Heart right ventricle (tissue), 16 donors: ENCODE measurements at regions of chr1 and their contacts with region 1.

Region 1: DNA sequence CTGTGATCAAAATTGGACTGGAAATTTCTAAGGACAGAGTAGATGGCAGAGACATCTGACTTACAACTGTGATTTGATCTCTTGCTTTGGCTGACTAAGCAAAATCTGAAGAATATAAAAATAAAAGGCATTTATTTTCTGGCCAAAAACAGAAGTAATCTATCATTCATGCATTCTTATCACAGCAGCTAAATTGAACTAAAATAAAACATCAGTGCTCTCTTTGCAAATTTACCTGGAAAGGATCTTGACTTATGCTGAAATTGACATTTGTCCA is 81.4 kb upstream of the ZNF678 start:
- DNase-seq: no peak
- ATAC-seq: no peak
- H3K4me3 ChIP-seq: no peak overlapping the region
- H3K27ac ChIP-seq: no peak overlapping the region
- H3K4me1 ChIP-seq: no peaks in the 10 kb centered on the region
- H3K27me3 ChIP-seq: peaks cover 0 to 17% (median 0%) of the 10 kb centered on the region in 7 donors
- CTCF ChIP-seq: no peak

Region 2: DNA sequence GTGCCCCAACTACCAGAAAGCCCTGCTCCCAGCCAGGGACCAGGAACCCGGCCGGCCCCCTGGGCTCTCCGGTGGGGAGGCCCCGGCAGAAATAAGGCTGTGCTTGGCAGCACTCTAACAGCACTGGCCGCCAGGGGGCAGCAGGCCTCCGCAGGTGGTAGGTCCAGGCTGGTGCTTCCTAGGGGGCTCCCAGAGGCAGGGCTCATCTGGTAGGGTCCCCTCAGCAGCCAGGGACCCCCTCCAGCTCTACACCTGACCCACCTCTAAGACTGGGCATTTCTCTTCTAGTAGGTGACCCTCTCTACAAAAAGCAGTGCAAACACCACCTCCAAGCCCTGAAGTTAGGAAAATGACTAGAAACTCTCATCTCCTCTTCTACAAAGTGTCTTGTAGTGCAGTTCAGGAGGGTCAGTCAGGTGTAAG is 847.8 kb before region 1 on chr1:
- intact Hi-C with region 1: no loop called
- DNase-seq: peak; percentile 80 to 86
- ATAC-seq: peak; percentile 64 to 83 (median 79)
- H3K4me3 ChIP-seq: no peak overlapping the region
- H3K27ac ChIP-seq: peak overlapping the region in 8 of 10 donors; percentile 11 to 71 (median 40)
- H3K4me1 ChIP-seq: peaks cover 7 to 68% (median 40%) of the 10 kb centered on the region in 9 donors
- H3K27me3 ChIP-seq: no peaks in the 10 kb centered on the region
- CTCF ChIP-seq: peak; percentile 93 to 98 (median 95)

Region 3: GRCh38 chr1:227542143-227543120 is 60.5 kb after region 1 on chr1:
- intact Hi-C with region 1: loop called in 7 of 10 experiments (anchors 2 to 10 kb)
- DNase-seq: peak; percentile 84 to 91
- ATAC-seq: peak; percentile 95 to 97 (median 97)
- H3K4me3 ChIP-seq: peak overlapping the region; percentile 45 to 88 (median 76)
- H3K27ac ChIP-seq: peak overlapping the region; percentile 2 to 78 (median 68)
- H3K4me1 ChIP-seq: peaks cover 0 to 17% (median 12%) of the 10 kb centered on the region in 9 donors
- H3K27me3 ChIP-seq: peaks cover 0 to 7% (median 0%) of the 10 kb centered on the region in 7 donors
- CTCF ChIP-seq: peak; percentile 95 to 99 (median 99)

Region 4: GRCh38 chr1:227563324-227564201 is 81.6 kb after region 1 on chr1 and contains the start of gene ZNF678:
- intact Hi-C with region 1: no loop called
- DNase-seq: peak; percentile 87 to 95
- ATAC-seq: peak; percentile 95 to 99 (median 97)
- H3K4me3 ChIP-seq: peak within 1 kb of the TSS; percentile 64 to 84 (median 76)
- H3K27ac ChIP-seq: peak within 1 kb of the TSS; percentile 64 to 90 (median 88)
- H3K4me1 ChIP-seq: peaks cover 0 to 20% (median 8%) of the 10 kb centered on the region in 9 donors
- H3K27me3 ChIP-seq: peaks cover 0 to 34% (median 33%) of the 10 kb centered on the region in 7 donors
- CTCF ChIP-seq: no peak
- total RNA-seq, gene ZNF678: 2.5 to 4.7 (median 3.5) TPM

Region 5: GRCh38 chr1:227728059-227728891 is 246.3 kb after region 1 on chr1:
- intact Hi-C with region 1: loop called in 2 of 10 experiments (anchors 5 to 10 kb)
- DNase-seq: peak; percentile 83 to 84
- ATAC-seq: peak; percentile 60 to 71 (median 66)
- H3K4me3 ChIP-seq: peak overlapping the region; percentile 36 to 79 (median 62)
- H3K27ac ChIP-seq: peak overlapping the region; percentile 56 to 87 (median 78)
- H3K4me1 ChIP-seq: peaks cover 10 to 41% (median 26%) of the 10 kb centered on the region in 9 donors
- H3K27me3 ChIP-seq: peaks cover 0 to 9% (median 0%) of the 10 kb centered on the region in 7 donors
- CTCF ChIP-seq: peak in 1 of 9 donors; percentile 9

Region 6: DNA sequence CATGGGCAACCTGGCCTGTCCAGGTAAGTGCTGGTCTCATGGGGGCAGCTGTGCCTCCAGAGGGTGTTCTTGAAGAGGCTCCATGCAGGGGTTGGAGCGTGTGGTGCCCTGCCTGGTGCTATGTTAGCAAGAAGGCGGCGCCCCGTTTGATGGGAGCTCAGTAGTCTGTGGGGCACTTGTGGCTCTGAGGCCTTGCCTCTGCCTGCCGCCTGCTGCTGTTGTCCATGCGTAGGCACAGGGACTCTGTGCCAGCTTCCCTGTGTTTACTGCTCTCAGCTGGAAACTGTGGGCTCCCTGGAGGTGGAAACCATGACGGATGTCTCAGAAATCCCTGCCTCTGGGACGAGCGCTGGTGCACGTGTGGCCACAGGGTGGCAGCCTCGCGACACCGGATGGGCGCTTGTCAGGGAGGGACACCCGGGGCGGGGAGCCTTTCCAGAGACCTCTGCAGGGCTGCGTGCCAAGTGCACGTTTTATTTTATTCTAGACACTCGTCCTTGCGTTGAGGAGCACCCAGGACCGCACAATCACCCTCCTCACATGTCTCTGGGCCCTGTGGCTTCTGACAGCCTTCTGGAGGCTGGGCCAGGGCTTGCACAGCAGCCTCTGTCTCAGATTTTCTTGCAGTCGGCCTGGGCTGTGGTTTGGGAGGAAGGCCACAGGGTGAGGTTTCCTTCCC is 280.4 kb after region 1 on chr1:
- intact Hi-C with region 1: loop called in 3 of 10 experiments (anchors 5 to 10 kb)
- DNase-seq: peak; percentile 90
- ATAC-seq: peak; percentile 81 to 89 (median 84)
- H3K4me3 ChIP-seq: peak overlapping the region in 4 of 10 donors; percentile 6 to 34 (median 24)
- H3K27ac ChIP-seq: peak overlapping the region in 8 of 10 donors; percentile 5 to 91 (median 63)
- H3K4me1 ChIP-seq: peaks cover 11 to 69% (median 54%) of the 10 kb centered on the region in 9 donors
- H3K27me3 ChIP-seq: no peaks in the 10 kb centered on the region
- CTCF ChIP-seq: peak; percentile 80 to 97 (median 92)

Region 7: DNA sequence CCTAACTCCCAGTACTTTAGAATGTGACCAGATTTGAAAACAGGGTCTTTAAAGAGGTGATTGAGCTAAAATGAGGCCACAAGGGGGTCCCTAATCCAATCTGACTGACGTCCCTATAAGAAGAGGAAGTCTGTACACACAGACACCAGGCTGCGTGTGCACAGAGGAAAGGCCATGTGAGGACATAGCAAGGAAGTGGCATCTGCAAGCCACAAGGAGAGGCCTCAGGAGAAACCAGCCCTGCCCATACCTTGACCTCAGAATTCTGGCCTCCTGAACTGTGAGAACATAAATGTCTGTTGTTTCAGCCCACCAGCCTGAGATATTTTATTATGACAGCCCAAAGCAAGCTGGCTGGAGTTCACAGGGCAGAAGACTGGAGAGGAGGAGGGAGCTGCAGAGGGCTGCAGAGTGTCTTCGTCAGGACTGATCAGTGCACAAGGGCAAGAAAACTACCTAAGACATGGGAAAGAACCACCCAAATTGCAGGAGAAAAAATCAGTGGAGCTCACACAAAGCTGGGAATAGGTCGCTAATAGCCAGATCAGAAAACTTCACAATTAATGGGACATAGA is 479.8 kb after region 1 on chr1:
- intact Hi-C with region 1: loop called in 1 of 10 experiments (anchors 5 kb)
- DNase-seq: no peak
- ATAC-seq: no peak
- H3K4me3 ChIP-seq: no peak overlapping the region
- H3K27ac ChIP-seq: no peak overlapping the region
- H3K4me1 ChIP-seq: no peaks in the 10 kb centered on the region
- H3K27me3 ChIP-seq: peaks cover 6 to 25% (median 14%) of the 10 kb centered on the region in 7 donors
- CTCF ChIP-seq: no peak